ENCODE measurements at regions of chr6 and their contacts with region 1.

Region 1: GRCh38 chr6:13711733-13712598 is at the start of gene RANBP9:
- DNase-seq: peak; percentile 85
- H3K4me3 Mint-ChIP-seq: peak within 1 kb of the TSS; percentile 93
- H3K27ac Mint-ChIP-seq: peak within 1 kb of the TSS; percentile 93
- H3K4me1 Mint-ChIP-seq: peaks cover 57% of the 10 kb centered on the region
- H3K27me3 Mint-ChIP-seq: no peaks in the 10 kb centered on the region
- total RNA-seq, gene RANBP9: 50.7 and 55.7 TPM in 2 replicates

Region 2: DNA sequence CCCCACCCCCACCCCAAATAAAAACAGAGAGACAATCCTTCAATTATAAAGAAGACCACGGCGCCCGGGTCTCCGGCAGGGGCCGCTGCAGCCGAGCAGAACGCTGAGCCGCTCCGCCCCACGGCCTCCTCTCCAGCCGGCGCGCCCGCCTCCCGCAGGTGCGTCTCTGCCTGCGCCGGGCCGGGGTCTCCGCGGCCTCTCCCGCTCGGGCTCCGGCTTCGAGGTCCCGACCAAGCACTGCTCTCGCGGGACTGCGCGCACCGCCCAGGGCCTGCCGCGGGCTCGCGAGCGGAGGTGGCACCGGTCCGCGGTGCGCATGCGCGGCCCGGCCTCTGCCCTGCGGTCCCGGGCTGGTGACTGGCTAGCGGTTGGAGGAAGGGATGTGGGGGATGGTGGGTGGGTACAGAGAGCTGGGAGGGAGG is 137.8 kb before region 1 on chr6:
- intact Hi-C with region 1: loop called (anchors 2 kb)
- DNase-seq: peak; percentile 90
- H3K4me3 Mint-ChIP-seq: peak overlapping the region; percentile 98
- H3K27ac Mint-ChIP-seq: peak overlapping the region; percentile 99
- H3K4me1 Mint-ChIP-seq: peaks cover 9% of the 10 kb centered on the region
- H3K27me3 Mint-ChIP-seq: peaks cover 4% of the 10 kb centered on the region

Region 3: GRCh38 chr6:13668291-13668928 is 43.6 kb before region 1 on chr6:
- intact Hi-C with region 1: loop called (anchors 2 kb)
- DNase-seq: no peak
- H3K4me3 Mint-ChIP-seq: peak overlapping the region; percentile 30
- H3K27ac Mint-ChIP-seq: peak overlapping the region; percentile 70
- H3K4me1 Mint-ChIP-seq: peaks cover 77% of the 10 kb centered on the region
- H3K27me3 Mint-ChIP-seq: no peaks in the 10 kb centered on the region

Region 4: GRCh38 chr6:13687917-13688351 is 24.0 kb before region 1 on chr6:
- intact Hi-C with region 1: loop called (anchors 2 kb)
- DNase-seq: no peak
- H3K4me3 Mint-ChIP-seq: no peak overlapping the region
- H3K27ac Mint-ChIP-seq: peak overlapping the region; percentile 53
- H3K4me1 Mint-ChIP-seq: peaks cover 49% of the 10 kb centered on the region
- H3K27me3 Mint-ChIP-seq: no peaks in the 10 kb centered on the region

Region 5: DNA sequence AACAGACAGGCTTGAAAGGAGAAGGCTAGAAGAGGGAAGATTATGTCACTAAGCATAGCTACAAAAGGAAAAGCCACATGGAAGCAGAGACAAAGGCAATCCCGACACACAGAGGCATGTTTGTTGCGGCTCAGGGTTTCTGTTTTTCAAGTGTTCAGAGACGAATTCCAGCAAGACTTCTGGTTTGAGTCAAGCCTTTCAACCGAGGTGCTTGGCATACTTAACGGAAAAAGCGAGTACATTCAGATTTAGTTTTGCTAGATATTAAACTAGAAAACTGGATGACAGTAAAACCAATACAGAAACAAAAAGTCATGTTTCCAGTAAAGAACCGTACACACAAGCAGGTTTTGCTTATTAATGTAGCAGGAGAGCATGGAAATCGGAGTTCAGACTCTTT is 75.2 kb after region 1 on chr6:
- intact Hi-C with region 1: loop called (anchors 2 kb)
- DNase-seq: no peak
- H3K4me3 Mint-ChIP-seq: peak overlapping the region; percentile 26
- H3K27ac Mint-ChIP-seq: peak overlapping the region; percentile 81
- H3K4me1 Mint-ChIP-seq: peaks cover 34% of the 10 kb centered on the region
- H3K27me3 Mint-ChIP-seq: no peaks in the 10 kb centered on the region

Region 6: DNA sequence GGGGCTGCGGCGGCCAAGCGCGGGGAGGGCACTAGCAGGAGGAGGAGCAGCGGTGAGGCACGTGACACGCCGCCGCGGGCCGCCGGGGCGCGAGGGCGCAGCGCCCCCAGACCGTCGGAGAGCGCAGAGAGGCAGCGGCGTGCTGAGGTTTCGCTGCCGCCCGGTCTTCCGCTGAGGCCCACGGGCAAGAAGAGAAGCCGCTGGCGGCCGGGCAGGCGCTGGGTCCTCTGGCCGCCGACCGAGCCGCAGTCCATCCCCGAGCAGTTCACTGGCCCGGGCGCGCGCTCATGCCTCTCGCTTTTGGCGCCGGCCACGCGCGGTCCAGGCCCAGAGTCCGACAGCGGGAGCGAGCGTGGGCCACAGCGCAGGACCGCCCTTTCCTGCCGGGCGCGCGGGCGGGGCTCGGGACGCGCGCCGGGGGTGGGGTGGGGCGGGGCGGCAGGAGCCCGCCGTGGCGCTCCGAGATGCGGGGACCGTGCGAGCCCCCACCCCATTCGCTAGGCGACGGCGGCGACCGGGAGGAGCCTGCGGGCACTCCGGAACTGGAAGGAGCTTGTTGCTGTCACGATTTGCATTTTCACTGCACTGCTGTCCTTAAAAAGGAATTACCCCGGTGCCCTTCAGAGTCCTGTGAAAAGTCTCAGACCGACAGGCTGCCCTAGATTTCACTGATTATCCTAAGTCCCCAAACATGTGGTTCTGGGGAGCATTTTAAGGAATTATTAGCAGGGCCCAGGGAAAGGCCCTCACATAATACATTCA is 102.4 kb after region 1 on chr6 and contains the start of gene MCUR1:
- intact Hi-C with region 1: loop called (anchors 5 kb)
- DNase-seq: peak; percentile 81
- H3K4me3 Mint-ChIP-seq: peak within 1 kb of the TSS; percentile 90
- H3K27ac Mint-ChIP-seq: peak within 1 kb of the TSS; percentile 77
- H3K4me1 Mint-ChIP-seq: peaks cover 34% of the 10 kb centered on the region
- H3K27me3 Mint-ChIP-seq: peaks cover 11% of the 10 kb centered on the region
- total RNA-seq, gene MCUR1: 39.8 and 41.4 TPM in 2 replicates

Region 7: GRCh38 chr6:14108571-14109410 is 396.8 kb after region 1 on chr6:
- intact Hi-C with region 1: loop called (anchors 5 kb)
- DNase-seq: no peak
- H3K4me3 Mint-ChIP-seq: peak overlapping the region; percentile 70
- H3K27ac Mint-ChIP-seq: peak overlapping the region; percentile 77
- H3K4me1 Mint-ChIP-seq: peaks cover 42% of the 10 kb centered on the region
- H3K27me3 Mint-ChIP-seq: peaks cover 12% of the 10 kb centered on the region

Measured in activated T-helper 2 cell treated with anti-CD3 and anti-CD28 coated beads, Interferon-gamma antibody, Interleukin-2, Interleukin-4, amounts not matched to agents 10 μg/mL and 5 μg/mL and 100 μg/mL, durations not matched to agents 14 hours and 24 hours and 36 hours (primary cell).